Endothelial cell of umbilical vein (primary cell): ENCODE measurements at regions of chr1 and their contacts with region 1.

Region 1: GRCh38 chr1:229258031-229258756 is 12.7 kb upstream of the RAB4A start:
- DNase-seq: peak; percentile 71
- H3K4me3 ChIP-seq: no peak overlapping the region
- H3K27ac ChIP-seq: no peak overlapping the region
- H3K4me1 ChIP-seq: peaks cover 5% of the 10 kb centered on the region
- H3K27me3 ChIP-seq: no peaks in the 10 kb centered on the region
- CTCF ChIP-seq: peak; percentile 68 to 80
- POLR2A ChIP-seq: no peak

Region 2: GRCh38 chr1:228691926-228692325 is 566.3 kb before region 1 on chr1:
- CTCF ChIA-PET with region 1: interaction called, 13 read pairs
- POLR2A ChIA-PET with region 1: no interaction called
- dilution Hi-C with region 1: no loop called
- intact Hi-C with region 1: no loop called
- DNase-seq: peak; percentile 44
- H3K4me3 ChIP-seq: no peak overlapping the region
- H3K27ac ChIP-seq: no peak overlapping the region
- H3K4me1 ChIP-seq: no peaks in the 10 kb centered on the region
- H3K27me3 ChIP-seq: no peaks in the 10 kb centered on the region
- CTCF ChIP-seq: peak in 1 of 2 donors; percentile 5
- POLR2A ChIP-seq: no peak

Region 3: DNA sequence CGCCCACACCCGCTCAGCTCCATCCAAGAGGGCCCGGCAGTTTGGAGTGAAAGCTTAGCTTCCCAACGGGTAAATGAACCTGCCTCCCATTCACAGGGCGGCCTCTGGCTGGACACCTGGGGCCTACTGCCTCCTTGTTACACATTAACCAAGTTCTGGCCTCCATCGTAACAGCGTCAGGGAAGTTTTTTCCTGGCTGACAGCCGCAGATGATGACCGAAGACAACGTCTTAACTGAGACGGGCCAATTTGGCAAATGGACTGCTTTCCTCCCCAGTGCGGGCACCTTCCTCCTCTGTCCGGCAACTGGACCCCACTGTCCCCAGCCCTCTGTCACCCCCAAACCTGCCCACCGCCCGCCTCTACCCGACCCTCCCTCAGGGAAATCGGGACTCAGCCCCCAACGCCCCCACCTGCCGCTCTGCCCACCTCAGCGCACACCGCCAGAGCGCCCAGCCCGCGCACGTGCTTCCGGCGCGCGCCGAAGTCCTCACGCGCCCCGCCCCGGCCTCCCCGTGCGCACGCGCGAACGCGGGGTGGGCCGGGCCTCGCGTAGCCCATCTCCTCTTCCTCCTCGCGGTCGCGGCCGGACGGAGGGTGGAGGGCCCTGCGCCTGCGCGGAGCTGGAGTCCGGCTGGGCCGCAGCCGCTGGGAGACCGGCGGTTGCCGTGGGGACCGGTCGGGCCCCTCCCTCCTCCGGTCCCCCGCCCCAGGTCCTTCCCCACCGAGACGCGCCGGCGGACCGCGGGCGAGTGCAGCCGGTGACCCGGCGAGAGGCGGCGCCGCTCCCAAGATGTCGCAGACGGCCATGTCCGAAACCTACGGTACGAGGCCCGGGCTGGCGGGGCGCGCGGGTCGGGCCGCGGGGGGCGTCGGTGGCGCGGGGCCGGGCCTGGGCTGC is 12.6 kb after region 1 on chr1 and contains the start of gene RAB4A:
- CTCF ChIA-PET with region 1: interaction called, 14 read pairs
- POLR2A ChIA-PET with region 1: no interaction called
- dilution Hi-C with region 1: no loop called
- intact Hi-C with region 1: no loop called
- DNase-seq: peak; percentile 89
- H3K4me3 ChIP-seq: peak within 1 kb of the TSS; percentile 57 to 93 (median 85)
- H3K27ac ChIP-seq: no peak within 1 kb of the TSS
- H3K4me1 ChIP-seq: peaks cover 10% of the 10 kb centered on the region
- H3K27me3 ChIP-seq: no peaks in the 10 kb centered on the region
- CTCF ChIP-seq: no peak
- POLR2A ChIP-seq: peak; percentile 76
- total RNA-seq, gene RAB4A: 43.2 and 52.9 TPM in 2 replicates

Region 4: GRCh38 chr1:229430761-229431283 is 172.6 kb after region 1 on chr1:
- CTCF ChIA-PET with region 1: no interaction called
- POLR2A ChIA-PET with region 1: no interaction called
- dilution Hi-C with region 1: no loop called
- intact Hi-C with region 1: loop called (anchors 5 kb)
- DNase-seq: peak; percentile 33
- H3K4me3 ChIP-seq: no peak overlapping the region
- H3K27ac ChIP-seq: no peak overlapping the region
- H3K4me1 ChIP-seq: no peaks in the 10 kb centered on the region
- H3K27me3 ChIP-seq: peaks cover 43 to 58% of the 10 kb centered on the region in 2 experiments
- CTCF ChIP-seq: no peak
- POLR2A ChIP-seq: no peak

Region 5: GRCh38 chr1:229470406-229471043 is 212.3 kb after region 1 on chr1:
- CTCF ChIA-PET with region 1: interaction called, 12 read pairs
- POLR2A ChIA-PET with region 1: no interaction called
- dilution Hi-C with region 1: no loop called
- intact Hi-C with region 1: no loop called
- DNase-seq: no peak
- H3K4me3 ChIP-seq: no peak overlapping the region
- H3K27ac ChIP-seq: no peak overlapping the region
- H3K4me1 ChIP-seq: no peaks in the 10 kb centered on the region
- H3K27me3 ChIP-seq: no peaks in the 10 kb centered on the region
- CTCF ChIP-seq: no peak
- POLR2A ChIP-seq: no peak

Region 6: GRCh38 chr1:229514578-229515275 is 256.5 kb after region 1 on chr1:
- CTCF ChIA-PET with region 1: interaction called, 54 read pairs
- POLR2A ChIA-PET with region 1: no interaction called
- dilution Hi-C with region 1: no loop called
- intact Hi-C with region 1: loop called (anchors 1 kb)
- DNase-seq: peak; percentile 67
- H3K4me3 ChIP-seq: no peak overlapping the region
- H3K27ac ChIP-seq: no peak overlapping the region
- H3K4me1 ChIP-seq: no peaks in the 10 kb centered on the region
- H3K27me3 ChIP-seq: no peaks in the 10 kb centered on the region
- CTCF ChIP-seq: peak; percentile 77 to 86
- POLR2A ChIP-seq: no peak

Region 7: DNA sequence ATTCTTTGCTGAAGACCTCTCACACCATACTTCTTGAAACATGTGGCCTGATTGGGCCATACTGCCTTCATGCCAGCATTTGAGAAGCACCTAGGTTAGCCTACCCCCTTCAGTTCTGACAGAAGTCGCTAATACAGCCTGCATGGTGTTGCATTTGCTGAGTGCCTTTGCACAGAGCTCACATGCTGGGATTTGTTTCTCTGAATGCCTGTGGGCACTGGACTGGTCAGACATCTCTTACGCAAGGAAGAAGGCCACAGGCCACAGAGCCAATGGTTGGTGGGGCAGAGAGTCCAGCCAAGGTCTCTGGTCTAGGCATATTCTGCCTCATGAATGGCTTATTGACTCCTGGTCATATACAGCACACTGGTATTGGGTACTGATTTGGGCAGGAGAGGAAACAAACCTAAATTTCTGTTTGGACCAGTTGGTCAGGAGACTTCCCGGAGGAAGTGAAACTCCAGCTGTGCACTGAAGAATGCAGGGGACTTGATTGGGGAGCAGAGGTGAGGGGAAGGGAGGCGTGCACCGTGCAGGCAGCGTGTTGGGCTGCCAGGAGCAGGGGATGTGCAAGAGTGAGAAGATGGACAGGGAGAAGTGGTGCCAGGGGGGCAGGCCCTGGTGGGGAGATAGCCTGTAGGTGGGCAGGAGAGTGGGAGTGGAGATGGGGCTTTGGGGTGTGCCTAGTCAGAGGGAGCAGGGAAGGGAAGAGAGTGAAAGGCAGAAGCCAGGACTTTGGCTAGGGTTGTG is 386.0 kb after region 1 on chr1:
- CTCF ChIA-PET with region 1: no interaction called
- POLR2A ChIA-PET with region 1: no interaction called
- dilution Hi-C with region 1: no loop called
- intact Hi-C with region 1: no loop called
- DNase-seq: no peak
- H3K4me3 ChIP-seq: no peak overlapping the region
- H3K27ac ChIP-seq: no peak overlapping the region
- H3K4me1 ChIP-seq: no peaks in the 10 kb centered on the region
- H3K27me3 ChIP-seq: no peaks in the 10 kb centered on the region
- CTCF ChIP-seq: no peak
- POLR2A ChIP-seq: no peak

Region 8: DNA sequence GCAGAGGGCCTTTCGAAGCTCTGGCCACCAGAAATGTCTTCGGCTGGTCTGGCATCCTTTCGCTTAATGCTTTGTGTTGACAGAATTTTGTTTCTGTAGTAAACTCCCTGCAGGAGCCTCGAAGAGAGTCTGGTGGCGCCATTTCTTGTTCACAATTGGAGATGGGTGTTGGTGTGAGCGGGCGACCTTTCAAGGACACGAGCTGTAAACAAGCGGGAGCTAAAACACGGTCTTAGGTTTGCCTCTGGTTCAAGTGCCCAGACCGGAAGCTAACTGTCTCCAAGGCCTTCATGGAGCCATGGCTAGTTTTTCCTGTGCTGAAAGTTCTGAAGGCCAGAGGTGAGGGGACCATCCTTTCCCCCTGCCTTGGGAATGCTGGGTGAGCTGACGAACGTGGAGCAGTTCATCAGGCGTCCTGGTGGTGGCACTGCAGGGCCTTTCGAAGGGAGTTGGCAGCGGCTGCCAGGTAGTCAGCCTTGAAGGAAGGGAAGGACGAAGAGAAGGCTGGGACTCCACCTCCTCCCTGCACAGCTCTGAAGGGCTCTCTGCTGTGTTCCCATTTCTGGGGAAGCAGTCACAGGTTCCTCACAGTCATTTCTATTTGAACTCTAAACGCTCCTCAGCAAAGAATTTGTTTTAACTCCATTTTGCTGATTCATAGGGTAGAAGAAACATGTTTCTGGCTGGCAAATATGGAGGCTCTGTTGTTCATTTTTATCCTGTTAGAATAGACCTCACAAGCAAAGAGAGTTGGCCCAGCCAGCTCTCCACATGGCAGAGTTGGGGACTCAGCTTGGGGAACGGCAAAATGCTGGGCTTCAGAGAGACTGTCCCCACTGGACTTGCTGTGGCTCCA is 403.1 kb after region 1 on chr1:
- CTCF ChIA-PET with region 1: no interaction called
- POLR2A ChIA-PET with region 1: no interaction called
- dilution Hi-C with region 1: no loop called
- intact Hi-C with region 1: loop called (anchors 1 kb)
- DNase-seq: peak; percentile 61
- H3K4me3 ChIP-seq: no peak overlapping the region
- H3K27ac ChIP-seq: no peak overlapping the region
- H3K4me1 ChIP-seq: peaks cover 17% of the 10 kb centered on the region
- H3K27me3 ChIP-seq: no peaks in the 10 kb centered on the region
- CTCF ChIP-seq: peak; percentile 82 to 92
- POLR2A ChIP-seq: no peak